ENCODE measurements at regions of chr19 and their contacts with region 1.

Region 1: GRCh38 chr19:50896591-50897190 is 14.5 kb downstream of the KLK4 start:
- DNase-seq: no peak
- H3K4me3 ChIP-seq: no peak overlapping the region
- H3K27ac ChIP-seq: no peak overlapping the region
- H3K4me1 ChIP-seq: no peaks in the 10 kb centered on the region
- H3K27me3 ChIP-seq: peaks cover 8% of the 10 kb centered on the region
- CTCF ChIP-seq: no peak

Region 2: GRCh38 chr19:50718255-50719118 is 178.2 kb before region 1 on chr19:
- CTCF ChIA-PET with region 1: interaction called, 11 read pairs
- POLR2A ChIA-PET with region 1: no interaction called
- intact Hi-C with region 1: no loop called
- DNase-seq: no peak
- H3K4me3 ChIP-seq: peak overlapping the region; percentile 71
- H3K27ac ChIP-seq: peak overlapping the region; percentile 61
- H3K4me1 ChIP-seq: peaks cover 48% of the 10 kb centered on the region
- H3K27me3 ChIP-seq: no peaks in the 10 kb centered on the region
- CTCF ChIP-seq: no peak

Measured in A673 (cell line).